ENCODE measurements at regions of chr3 and their contacts with region 1.

Region 1: DNA sequence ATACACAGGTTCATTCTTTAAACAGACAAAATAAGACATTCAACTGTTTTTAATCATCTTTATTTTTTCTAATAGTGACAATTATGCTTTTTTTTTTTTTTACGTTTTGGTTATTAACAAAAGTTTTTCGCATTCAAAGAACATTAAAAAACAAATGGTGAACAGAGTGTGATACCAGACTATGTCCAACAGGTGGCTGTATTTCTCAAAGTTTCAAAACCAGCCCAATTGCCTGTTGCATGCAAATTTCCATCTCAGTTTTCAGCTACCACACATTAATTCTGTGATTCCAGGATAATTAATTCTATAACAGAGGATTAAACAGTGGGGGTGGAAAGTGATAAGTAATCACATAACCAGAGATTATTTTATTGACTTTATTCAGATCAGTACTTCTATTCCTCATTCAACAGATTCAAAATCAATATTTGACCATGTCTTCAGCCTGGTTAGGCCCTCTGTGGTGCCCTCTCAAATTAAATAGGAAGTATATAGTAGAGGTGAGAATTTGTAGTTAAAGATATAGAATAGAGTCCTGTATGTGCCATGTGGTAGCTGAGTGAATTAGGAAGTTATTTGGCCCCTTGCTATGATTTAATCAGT is 122.2 kb upstream of the DCBLD2 start:
- DNase-seq: peak; percentile 66
- H3K4me3 ChIP-seq: no peak overlapping the region
- H3K27ac ChIP-seq: no peak overlapping the region
- H3K4me1 ChIP-seq: no peaks in the 10 kb centered on the region
- H3K27me3 ChIP-seq: no peaks in the 10 kb centered on the region
- CTCF ChIP-seq: peak; percentile 40 to 46
- POLR2A ChIP-seq: no peak

Region 2: DNA sequence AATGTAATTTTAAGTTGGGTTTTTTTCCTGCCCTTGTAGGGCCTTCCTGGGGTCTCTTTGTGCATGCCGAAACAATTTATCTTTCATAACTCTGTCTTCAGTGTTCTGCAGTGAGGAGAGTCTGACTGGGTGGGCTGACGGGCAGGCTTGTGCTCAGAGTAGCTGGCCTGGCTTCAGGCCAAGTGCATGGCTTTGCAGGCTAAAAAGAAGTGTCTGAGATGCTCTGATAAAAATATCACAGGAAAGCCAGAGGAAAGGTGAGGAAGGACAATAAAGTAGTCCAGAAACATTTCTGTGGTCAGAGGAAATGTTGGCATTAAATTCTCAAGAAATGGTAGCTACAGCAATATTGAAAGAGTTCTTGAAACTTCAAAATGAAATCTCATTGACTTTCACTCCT is 235.0 kb before region 1 on chr3:
- CTCF ChIA-PET with region 1: no interaction called
- POLR2A ChIA-PET with region 1: no interaction called
- dilution Hi-C with region 1: no loop called
- intact Hi-C with region 1: no loop called
- DNase-seq: peak; percentile 74
- H3K4me3 ChIP-seq: no peak overlapping the region
- H3K27ac ChIP-seq: no peak overlapping the region
- H3K4me1 ChIP-seq: peaks cover 20% of the 10 kb centered on the region
- H3K27me3 ChIP-seq: no peaks in the 10 kb centered on the region
- CTCF ChIP-seq: no peak
- POLR2A ChIP-seq: no peak

Region 3: GRCh38 chr3:98827221-98827920 is 196.3 kb before region 1 on chr3:
- CTCF ChIA-PET with region 1: no interaction called
- POLR2A ChIA-PET with region 1: no interaction called
- dilution Hi-C with region 1: no loop called
- intact Hi-C with region 1: no loop called
- DNase-seq: no peak
- H3K4me3 ChIP-seq: no peak overlapping the region
- H3K27ac ChIP-seq: no peak overlapping the region
- H3K4me1 ChIP-seq: no peaks in the 10 kb centered on the region
- H3K27me3 ChIP-seq: no peaks in the 10 kb centered on the region
- CTCF ChIP-seq: no peak
- POLR2A ChIP-seq: no peak

Region 4: GRCh38 chr3:98893740-98894139 is 130.0 kb before region 1 on chr3:
- CTCF ChIA-PET with region 1: no interaction called
- POLR2A ChIA-PET with region 1: no interaction called
- dilution Hi-C with region 1: no loop called
- intact Hi-C with region 1: no loop called
- DNase-seq: no peak
- H3K4me3 ChIP-seq: no peak overlapping the region
- H3K27ac ChIP-seq: no peak overlapping the region
- H3K4me1 ChIP-seq: peaks cover 51% of the 10 kb centered on the region
- H3K27me3 ChIP-seq: no peaks in the 10 kb centered on the region
- CTCF ChIP-seq: no peak
- POLR2A ChIP-seq: no peak

Region 5: GRCh38 chr3:99012051-99012450 is 11.6 kb before region 1 on chr3:
- CTCF ChIA-PET with region 1: interaction called, 13 read pairs
- POLR2A ChIA-PET with region 1: no interaction called
- dilution Hi-C with region 1: no loop called
- intact Hi-C with region 1: no loop called
- DNase-seq: no peak
- H3K4me3 ChIP-seq: no peak overlapping the region
- H3K27ac ChIP-seq: no peak overlapping the region
- H3K4me1 ChIP-seq: no peaks in the 10 kb centered on the region
- H3K27me3 ChIP-seq: no peaks in the 10 kb centered on the region
- CTCF ChIP-seq: no peak
- POLR2A ChIP-seq: no peak

Region 6: GRCh38 chr3:99645277-99646106 is 621.8 kb after region 1 on chr3:
- CTCF ChIA-PET with region 1: interaction called, 7 read pairs
- POLR2A ChIA-PET with region 1: no interaction called
- dilution Hi-C with region 1: no loop called
- intact Hi-C with region 1: loop called (anchors 2 kb)
- DNase-seq: peak; percentile 76
- H3K4me3 ChIP-seq: no peak overlapping the region
- H3K27ac ChIP-seq: peak overlapping the region; percentile 75
- H3K4me1 ChIP-seq: peaks cover 97% of the 10 kb centered on the region
- H3K27me3 ChIP-seq: no peaks in the 10 kb centered on the region
- CTCF ChIP-seq: peak; percentile 47 to 68
- POLR2A ChIP-seq: peak; percentile 34

Region 7: DNA sequence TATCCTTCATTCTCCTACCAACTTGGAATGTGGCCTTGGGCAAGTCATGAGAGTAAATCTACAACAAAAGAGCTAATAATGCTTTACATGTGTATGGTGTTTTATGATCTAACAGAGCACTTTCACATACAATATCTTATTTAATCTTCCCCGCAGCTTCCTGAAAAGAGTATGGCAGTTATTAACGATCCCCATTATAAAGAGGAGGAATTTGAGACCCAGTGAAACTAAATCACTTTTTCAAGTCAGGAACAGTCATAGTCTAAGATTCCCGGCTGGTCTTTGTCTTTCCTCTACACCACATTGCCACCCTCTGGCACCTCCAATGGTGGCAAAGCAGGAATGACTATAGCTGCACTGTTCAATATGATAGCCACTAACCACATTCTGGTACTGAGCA is 724.2 kb after region 1 on chr3:
- CTCF ChIA-PET with region 1: interaction called, 47 read pairs
- POLR2A ChIA-PET with region 1: no interaction called
- dilution Hi-C with region 1: loop called (anchors 25 kb)
- intact Hi-C with region 1: loop called (anchors 1 kb)
- DNase-seq: peak; percentile 62
- H3K4me3 ChIP-seq: no peak overlapping the region
- H3K27ac ChIP-seq: peak overlapping the region; percentile 12
- H3K4me1 ChIP-seq: peaks cover 24% of the 10 kb centered on the region
- H3K27me3 ChIP-seq: no peaks in the 10 kb centered on the region
- CTCF ChIP-seq: peak; percentile 23 to 27
- POLR2A ChIP-seq: no peak

Region 8: DNA sequence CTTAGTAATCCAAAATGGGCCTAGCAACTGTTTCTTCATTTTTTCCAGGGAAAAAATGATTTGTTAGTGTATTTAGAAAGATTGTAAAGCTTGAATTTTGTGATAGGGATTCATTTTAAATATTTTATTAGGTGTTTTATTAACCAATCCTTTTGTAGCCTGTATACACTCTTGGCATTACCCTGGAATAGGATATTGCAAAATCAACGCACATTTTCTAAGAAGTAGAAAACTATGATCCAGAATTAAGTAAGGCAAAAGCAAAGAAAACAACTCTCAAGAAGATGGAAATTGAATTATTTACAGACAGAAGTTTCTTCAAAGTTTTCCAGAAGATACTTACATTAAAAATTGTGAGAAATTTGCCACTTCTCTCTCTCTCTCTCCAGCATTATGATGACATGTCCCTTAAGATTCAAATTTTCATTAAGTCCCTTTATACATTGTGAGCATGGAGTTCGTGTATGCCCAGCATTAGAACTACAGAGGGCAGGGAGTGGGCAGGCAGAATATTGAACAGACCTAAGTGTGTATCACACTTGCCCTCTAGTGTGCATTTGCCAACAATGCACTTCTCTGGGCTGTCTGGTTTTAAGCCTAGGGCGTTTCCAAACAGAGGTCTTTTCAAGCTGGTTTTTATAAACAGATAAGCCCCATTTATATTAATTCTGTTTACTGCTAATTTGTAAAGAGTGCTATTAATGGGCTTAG is 765.5 kb after region 1 on chr3:
- CTCF ChIA-PET with region 1: interaction called, 19 read pairs
- POLR2A ChIA-PET with region 1: no interaction called
- dilution Hi-C with region 1: no loop called
- intact Hi-C with region 1: loop called (anchors 2 kb)
- DNase-seq: peak; percentile 68
- H3K4me3 ChIP-seq: no peak overlapping the region
- H3K27ac ChIP-seq: no peak overlapping the region
- H3K4me1 ChIP-seq: no peaks in the 10 kb centered on the region
- H3K27me3 ChIP-seq: no peaks in the 10 kb centered on the region
- CTCF ChIP-seq: peak; percentile 52 to 58
- POLR2A ChIP-seq: no peak